RWPE1 (cell line): ENCODE measurements at regions of chr9 and their contacts with region 1.

Region 1: GRCh38 chr9:90914868-90915483 is 113.4 kb downstream of the SYK start:
- DNase-seq: peak; percentile 96
- H3K27ac ChIP-seq: peak overlapping the region; percentile 43
- CTCF ChIP-seq: peak; percentile 99

Region 2: DNA sequence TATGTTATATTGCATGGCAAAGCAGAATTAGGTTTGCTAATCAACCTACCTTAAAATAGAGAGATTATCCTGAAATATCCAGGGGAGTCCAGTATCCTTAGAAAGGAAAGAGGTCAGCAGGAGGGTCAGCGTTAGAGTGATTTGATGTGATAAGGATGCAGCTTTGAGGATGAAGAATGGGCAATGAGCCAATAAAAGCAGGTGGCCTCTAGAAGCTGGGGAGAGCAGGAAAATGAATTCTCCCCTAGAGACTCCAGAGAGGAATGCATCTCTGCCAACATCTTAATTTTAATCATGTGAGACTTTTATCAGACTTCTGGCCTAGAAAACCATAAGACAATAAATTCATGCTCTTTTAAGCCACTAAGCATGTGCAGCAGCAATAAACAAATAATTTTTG is 179.0 kb before region 1 on chr9:
- CTCF ChIA-PET with region 1: no interaction called
- POLR2A ChIA-PET with region 1: no interaction called
- DNase-seq: no peak
- H3K27ac ChIP-seq: no peak overlapping the region
- CTCF ChIP-seq: no peak

Region 3: DNA sequence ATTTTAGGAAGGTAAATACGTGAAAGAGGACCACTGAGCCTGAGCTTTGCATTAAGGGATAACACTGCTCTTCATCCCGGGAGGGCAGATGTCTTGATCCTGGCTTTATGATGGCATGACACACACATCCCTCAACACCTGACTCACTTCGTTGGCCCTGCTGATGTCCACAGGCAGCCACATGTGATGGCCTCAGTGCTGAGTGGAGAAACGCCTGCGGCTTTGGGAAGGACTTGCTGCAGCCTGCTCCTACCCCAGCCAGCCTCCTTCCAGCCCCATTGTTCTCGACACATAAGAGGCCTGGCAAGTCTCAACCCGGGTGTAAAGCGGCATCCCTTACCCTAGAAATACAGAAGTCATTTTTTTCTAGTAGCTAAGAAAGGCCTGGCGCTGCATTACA is 55.6 kb after region 1 on chr9:
- CTCF ChIA-PET with region 1: interaction called, 12 read pairs
- POLR2A ChIA-PET with region 1: no interaction called
- DNase-seq: peak; percentile 97
- H3K27ac ChIP-seq: peak overlapping the region; percentile 88
- CTCF ChIP-seq: no peak

Region 4: GRCh38 chr9:91182429-91183225 is 267.7 kb after region 1 on chr9:
- CTCF ChIA-PET with region 1: interaction called, 10 read pairs
- POLR2A ChIA-PET with region 1: no interaction called
- DNase-seq: peak; percentile 97
- H3K27ac ChIP-seq: peak overlapping the region; percentile 69
- CTCF ChIP-seq: no peak

Region 5: GRCh38 chr9:91422758-91423711 is 508.1 kb after region 1 on chr9:
- CTCF ChIA-PET with region 1: interaction called, 85 read pairs
- POLR2A ChIA-PET with region 1: no interaction called
- DNase-seq: peak; percentile 84
- H3K27ac ChIP-seq: peak overlapping the region; percentile 93
- CTCF ChIP-seq: peak; percentile 54

Region 6: DNA sequence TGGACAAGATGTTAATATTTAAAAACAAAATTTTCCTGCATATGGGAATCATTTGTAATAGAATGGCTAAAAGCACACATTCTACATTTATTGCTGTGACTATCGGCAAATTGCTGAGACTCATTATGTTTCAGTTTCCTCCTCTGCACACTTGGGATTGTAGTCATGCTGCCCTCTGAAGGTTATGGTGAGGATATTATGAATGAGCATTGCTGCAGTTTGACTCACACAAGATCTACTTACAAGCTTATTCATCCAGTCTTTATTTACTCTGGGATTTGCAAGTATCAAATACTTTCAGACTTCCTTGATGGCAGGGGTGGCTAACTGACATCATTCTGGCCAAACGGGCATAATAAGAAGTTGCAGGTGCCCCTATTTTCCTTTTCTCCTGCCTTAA is 518.2 kb after region 1 on chr9:
- CTCF ChIA-PET with region 1: interaction called, 85 read pairs
- POLR2A ChIA-PET with region 1: no interaction called
- DNase-seq: peak; percentile 92
- H3K27ac ChIP-seq: no peak overlapping the region
- CTCF ChIP-seq: peak; percentile 89

Region 7: DNA sequence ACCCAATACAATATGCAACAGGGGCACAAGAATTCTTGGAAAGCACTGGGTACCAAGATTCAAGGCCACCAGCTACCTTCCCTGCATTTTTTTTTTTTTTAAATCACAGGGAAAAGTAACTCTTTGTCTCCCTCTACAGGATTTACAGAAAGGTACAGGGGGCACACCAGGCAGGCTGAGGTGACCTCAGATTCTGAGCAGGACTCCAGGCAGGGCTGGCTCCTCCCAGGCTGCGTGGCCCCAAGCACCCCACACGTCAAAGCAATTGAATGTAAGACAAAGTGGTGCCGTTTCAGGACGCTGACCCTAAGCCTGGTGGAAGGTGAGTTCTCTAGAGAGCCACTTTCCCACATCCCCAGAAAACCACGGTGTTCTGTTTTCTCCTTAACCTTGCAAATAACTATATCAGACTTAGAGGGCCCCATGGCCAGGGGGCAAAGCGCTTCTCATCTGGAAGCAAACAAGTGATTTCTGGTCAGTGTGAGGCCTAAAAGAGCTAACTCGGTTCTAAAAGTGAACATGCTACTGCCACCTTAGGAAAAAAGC is 812.4 kb after region 1 on chr9:
- CTCF ChIA-PET with region 1: interaction called, 12 read pairs
- POLR2A ChIA-PET with region 1: no interaction called
- DNase-seq: peak; percentile 87
- H3K27ac ChIP-seq: no peak overlapping the region
- CTCF ChIP-seq: peak; percentile 95